ENCODE measurements at regions of chr20 and their contacts with region 1.

Region 1: DNA sequence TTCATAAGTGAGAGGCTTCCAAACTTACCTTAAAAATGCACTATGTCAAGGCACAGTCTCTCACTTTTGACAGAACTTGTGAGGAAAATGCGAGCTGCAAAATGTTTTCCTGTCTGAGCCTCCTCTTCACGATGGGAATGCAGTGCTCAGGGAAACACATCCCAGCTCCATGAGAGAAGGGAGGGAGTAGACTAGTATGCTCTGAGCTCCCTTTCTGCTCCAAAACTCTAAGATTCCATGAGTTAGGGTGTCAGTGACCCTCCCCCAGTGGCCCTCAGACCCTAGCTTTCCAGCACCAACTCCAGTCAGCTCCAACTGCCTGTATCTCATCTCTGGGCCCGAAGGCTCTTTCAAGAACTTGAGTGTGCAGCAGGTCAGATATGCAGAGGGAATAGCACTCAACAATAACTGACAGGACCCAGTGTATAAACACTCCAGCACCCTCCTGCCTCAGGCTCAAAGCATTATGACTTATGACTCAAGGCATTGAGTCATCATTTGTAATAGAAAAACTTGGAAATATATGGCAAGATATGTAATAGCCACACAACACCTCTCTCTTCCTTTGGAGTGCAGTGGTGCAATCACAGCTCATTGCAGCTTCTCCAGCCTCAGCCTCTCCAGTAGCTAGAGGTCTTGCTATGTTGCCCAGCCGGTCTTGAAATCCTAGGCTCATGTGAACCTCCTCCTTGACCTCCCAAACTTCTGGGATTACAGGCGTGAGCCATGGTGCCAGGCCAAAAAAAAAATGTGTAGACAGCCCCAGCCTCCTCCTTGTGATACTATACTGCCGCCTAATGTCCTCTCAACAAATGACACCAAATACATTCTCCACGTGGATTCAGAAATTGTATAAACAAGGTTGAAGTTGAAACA is 16.7 kb upstream of the ENTPD6 start:
- DNase-seq: no peak

Region 2: GRCh38 chr20:24981790-24982189 is 197.0 kb before region 1 on chr20:
- intact Hi-C with region 1: no loop called
- DNase-seq: peak; percentile 85

Region 3: GRCh38 chr20:25065625-25066338 is 113.0 kb before region 1 on chr20:
- intact Hi-C with region 1: loop called (anchors 5 kb)
- DNase-seq: peak; percentile 77

Region 4: DNA sequence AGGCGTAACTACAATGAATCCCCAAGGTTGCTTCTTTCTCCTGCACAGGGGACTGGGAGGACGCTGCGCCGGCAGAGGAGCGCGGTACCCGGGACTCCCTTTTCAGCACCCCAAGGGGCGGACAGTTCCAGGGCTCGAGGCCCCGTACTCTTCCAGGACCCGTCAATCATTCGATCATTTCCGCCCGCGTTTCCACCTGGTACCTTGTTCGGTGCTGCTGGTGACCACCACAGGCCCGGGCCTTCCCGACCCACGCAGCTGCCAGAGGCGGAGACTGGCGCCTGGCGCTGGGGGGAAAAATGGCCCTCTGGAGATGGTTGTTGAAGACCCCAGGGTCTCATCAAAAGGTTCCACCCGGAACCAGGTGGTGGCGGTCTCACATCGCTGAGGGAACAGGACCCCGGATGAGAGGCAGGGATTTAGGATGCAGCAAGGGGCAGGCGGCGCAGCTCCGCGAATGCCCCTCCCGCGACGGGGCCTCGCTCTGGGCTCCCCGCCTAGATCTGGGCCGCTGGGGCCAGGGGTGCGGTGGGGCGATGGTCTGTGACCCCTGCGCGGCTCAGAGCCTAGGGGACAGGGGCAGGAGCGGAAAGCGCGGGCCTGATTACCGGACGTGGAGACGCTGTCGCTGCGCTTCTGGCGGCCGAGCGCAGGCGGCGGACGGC is 97.6 kb before region 1 on chr20:
- intact Hi-C with region 1: loop called (anchors 5 kb)
- DNase-seq: peak; percentile 72

Region 5: GRCh38 chr20:25129908-25130307 is 48.9 kb before region 1 on chr20:
- intact Hi-C with region 1: no loop called
- DNase-seq: no peak

Region 6: GRCh38 chr20:25356271-25356933 is 177.6 kb after region 1 on chr20:
- intact Hi-C with region 1: no loop called
- DNase-seq: peak; percentile 46

Measured in cardiac septum (tissue), 1 donor.